Cardiac septum (tissue), 1 donor: ENCODE measurements at regions of chr20 and their contacts with region 1.

Region 1: DNA sequence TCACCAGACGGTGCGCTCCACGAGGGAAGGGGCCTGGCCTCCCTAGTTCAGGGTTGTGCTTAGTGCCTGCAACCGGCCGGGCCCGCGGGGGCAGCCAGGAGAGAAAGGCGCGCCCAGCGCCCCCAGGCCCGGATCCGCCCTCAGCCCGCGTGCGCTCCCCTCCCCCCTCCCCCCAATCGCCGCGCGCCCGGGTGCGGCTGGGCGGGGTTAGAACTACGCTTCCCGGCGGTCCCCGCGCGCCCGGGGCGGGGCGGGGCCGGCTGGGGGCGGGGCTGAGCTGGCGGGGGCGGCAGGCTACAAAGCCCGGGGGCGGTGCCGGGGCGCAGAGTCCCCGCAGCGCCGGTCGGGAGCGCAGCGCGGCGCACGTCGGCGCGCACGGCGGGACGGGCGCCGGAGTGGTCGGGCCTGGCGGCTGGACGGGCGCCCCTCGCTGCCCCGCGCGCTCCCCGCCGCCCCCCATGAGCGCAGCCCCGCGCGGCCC is at the start of gene RBM38:
- DNase-seq: peak; percentile 91
- total RNA-seq, gene RBM38: 63.1 TPM

Region 2: GRCh38 chr20:57351042-57351783 is 39.9 kb before region 1 on chr20 and contains the start of gene RAE1:
- intact Hi-C with region 1: no loop called
- DNase-seq: peak; percentile 95
- total RNA-seq, gene RAE1: 13.8 TPM

Region 3: DNA sequence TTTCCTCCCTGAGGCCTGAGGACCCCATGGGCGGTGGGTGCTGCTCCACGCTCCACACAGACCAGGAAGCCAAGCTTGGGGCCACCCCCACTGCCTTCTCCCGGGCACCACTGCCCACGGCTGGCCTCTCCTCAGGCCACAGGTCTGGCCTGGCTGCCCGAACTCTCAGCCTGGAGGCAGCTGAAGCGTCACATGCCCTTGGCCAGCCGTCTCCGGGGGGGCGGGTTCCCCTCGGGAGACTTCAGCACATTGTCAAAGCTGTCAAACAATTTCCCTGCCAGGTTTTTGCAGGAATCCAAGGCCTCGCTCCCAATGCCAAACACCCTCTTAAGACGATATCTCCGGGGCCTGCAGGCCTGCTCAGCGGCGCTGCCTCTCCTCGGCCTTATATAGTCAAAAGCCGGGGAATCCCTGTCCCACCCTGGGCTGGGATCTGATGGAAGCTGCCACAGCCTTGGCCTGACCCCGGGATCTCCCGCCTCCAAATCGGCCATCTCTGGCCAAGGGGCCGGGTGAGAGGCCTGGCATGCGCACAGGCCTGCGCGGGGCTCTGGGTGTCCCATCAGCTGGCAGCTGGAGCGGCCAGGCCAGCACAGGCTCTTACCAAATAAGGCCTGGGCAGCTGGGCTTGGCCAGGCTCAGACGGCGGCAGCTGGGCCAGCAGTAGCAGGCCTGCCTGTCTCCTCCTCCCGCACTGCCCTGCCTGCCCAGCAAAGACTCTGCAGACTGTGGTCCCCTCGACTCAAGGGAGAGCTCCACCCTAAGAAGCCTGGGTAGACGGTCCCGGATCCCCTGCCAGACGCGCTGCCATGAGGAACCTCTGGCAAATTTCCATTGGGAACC is 49.8 kb after region 1 on chr20:
- intact Hi-C with region 1: loop called (anchors 1 kb)
- DNase-seq: peak; percentile 90

Region 4: GRCh38 chr20:57469418-57470211 is 78.5 kb after region 1 on chr20:
- intact Hi-C with region 1: loop called (anchors 1 kb)
- DNase-seq: peak; percentile 27

Region 5: DNA sequence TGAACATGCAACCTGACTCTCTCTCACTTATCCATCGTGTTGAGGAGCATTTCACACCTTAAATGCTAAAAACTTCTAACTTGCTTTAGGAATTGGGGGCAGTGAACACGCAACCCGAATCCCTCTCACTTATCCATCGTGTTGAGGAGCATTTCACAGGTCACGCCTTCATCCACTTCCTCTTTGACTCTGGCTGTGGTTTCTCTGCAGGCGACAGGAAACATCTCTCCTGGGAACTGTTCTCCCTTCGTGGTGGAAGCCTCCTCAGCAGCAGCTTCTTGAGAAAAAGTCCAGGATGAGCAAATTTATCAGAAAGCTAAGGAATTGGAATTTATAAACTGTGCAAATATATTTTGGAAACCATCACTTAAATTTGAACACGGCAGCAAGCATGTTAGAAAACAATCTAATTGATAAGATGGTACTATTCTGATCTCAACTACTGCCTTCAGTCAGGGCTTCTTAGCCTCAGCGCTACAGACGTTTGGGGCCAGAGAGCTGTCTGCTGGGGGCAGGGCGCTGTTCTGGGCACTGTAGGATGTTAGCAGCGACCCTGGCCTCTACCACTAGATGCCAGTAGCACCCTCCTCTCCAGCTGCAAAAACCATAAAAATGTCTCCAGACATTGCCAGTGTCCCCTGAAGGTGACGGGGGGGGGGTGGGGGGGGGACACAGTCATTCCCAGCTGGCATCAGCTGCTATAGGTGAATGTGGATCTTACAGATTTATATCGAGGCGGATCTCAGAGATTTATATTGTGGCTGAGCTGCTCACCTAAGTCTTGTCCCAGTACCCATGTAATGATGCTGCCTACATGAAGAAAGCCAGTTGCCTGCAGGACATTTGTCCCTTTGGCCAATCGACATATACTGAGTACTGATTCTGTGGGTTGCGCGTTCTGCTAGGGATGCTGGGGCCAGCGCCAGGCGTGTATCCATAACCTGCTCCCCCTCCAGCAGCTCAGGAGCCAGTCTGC is 107.6 kb after region 1 on chr20:
- intact Hi-C with region 1: loop called (anchors 2 kb)
- DNase-seq: peak; percentile 78

Region 6: GRCh38 chr20:57718490-57719271 is 327.6 kb after region 1 on chr20:
- intact Hi-C with region 1: loop called (anchors 10 kb)
- DNase-seq: peak; percentile 96

Region 7: DNA sequence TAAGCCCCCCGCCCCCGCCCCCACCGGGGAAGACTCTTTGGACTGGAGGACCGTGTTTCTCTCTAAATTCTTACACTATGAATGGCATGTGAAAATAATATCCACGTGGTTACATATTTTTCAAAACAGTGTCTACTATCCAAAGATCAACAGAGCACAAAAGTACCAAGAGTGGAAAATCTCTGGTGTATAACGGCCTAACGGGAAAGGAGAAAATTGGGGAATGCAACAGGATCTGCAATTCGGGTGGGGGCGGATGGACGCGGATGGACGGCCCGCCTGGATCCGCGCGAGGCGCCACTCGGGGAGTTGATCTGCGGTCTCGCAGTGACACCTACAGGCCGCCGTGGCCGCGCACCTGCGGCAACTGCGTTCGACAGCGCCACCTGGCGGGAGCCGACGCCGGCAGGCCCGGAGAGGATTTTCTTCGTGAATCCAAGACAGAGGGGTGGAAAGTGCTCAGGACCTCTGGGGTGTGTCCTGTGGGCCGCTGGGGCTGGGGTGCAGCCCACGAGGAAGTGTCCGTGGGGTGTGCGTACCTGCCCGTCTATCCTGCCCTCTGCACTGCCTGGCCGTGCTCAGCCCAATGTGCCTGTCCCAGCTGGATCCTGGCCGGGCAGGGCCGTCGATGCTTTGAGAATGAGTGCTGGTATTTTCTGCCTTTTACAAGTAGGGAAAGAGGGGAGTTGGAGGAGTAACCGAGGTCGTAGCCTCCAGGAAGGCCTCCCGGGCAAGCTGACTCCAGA is 818.7 kb after region 1 on chr20:
- intact Hi-C with region 1: loop called (anchors 10 kb)
- DNase-seq: peak; percentile 94